IMR-90 (cell line): ENCODE measurements at regions of chr22 and their contacts with region 1.

Region 1: DNA sequence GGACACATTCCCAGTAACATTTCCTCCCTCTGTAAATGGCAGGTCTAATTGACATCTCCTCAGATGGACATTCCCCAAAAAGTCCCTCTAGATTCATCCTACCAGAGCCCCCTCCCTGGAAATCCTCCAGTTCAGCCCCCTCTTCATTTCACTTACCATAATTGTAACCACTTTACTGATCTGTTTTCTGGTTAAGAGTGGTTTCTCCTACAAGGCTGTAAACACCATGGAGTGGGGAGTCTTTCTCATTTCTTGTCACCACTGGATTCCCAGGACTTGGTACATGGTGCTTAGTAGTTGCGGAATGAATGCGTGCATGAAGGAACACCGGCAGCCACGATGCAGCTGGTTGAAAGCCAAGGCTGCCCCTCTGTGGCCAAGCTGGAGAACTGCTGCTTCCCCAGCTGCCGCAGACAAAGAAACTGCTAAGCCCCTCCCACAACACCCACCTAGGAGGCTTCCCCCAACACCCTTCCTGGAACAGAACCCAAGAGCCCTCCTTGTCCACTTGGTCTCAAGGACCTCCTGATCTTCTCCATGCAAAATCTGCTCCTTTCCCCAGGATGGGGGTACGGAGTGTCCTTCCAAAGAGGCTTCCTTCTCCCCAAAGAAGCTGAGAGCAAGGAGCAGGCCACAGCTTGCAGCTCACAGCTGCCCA is 18.6 kb upstream of the SCARF2 start:
- DNase-seq: peak; percentile 86
- ATAC-seq: peak; percentile 97
- H3K4me3 ChIP-seq: no peak overlapping the region
- H3K27ac ChIP-seq: no peak overlapping the region
- H3K4me1 ChIP-seq: peaks cover 5% of the 10 kb centered on the region
- H3K27me3 ChIP-seq: no peaks in the 10 kb centered on the region
- CTCF ChIP-seq: peak; percentile 97
- POLR2A ChIP-seq: no peak
- RAD21 ChIP-seq: peak; percentile 97

Region 2: GRCh38 chr22:20156611-20157429 is 299.4 kb before region 1 on chr22:
- CTCF ChIA-PET with region 1: no interaction called
- POLR2A ChIA-PET with region 1: no interaction called
- dilution Hi-C with region 1: no loop called
- in situ Hi-C with region 1: loop called (anchors 10 kb)
- intact Hi-C with region 1: loop called (anchors 5 kb)
- DNase-seq: peak; percentile 66
- ATAC-seq: peak; percentile 88
- H3K4me3 ChIP-seq: no peak overlapping the region
- H3K27ac ChIP-seq: no peak overlapping the region
- H3K4me1 ChIP-seq: peaks cover 6% of the 10 kb centered on the region
- H3K27me3 ChIP-seq: peaks cover 13% of the 10 kb centered on the region
- CTCF ChIP-seq: peak; percentile 96
- POLR2A ChIP-seq: peak; percentile 43; the same call in 1 of the 2 replicates
- RAD21 ChIP-seq: peak; percentile 98

Region 3: GRCh38 chr22:20380486-20380885 is 75.7 kb before region 1 on chr22:
- CTCF ChIA-PET with region 1: no interaction called
- POLR2A ChIA-PET with region 1: no interaction called
- dilution Hi-C with region 1: no loop called
- in situ Hi-C with region 1: no loop called
- intact Hi-C with region 1: no loop called
- DNase-seq: no peak
- ATAC-seq: no peak
- H3K4me3 ChIP-seq: no peak overlapping the region
- H3K27ac ChIP-seq: no peak overlapping the region
- H3K4me1 ChIP-seq: no peaks in the 10 kb centered on the region
- H3K27me3 ChIP-seq: peaks cover 12% of the 10 kb centered on the region
- CTCF ChIP-seq: no peak
- POLR2A ChIP-seq: no peak
- RAD21 ChIP-seq: no peak

Region 4: GRCh38 chr22:20393909-20394691 is 62.1 kb before region 1 on chr22 and contains the start of gene ZNF74:
- CTCF ChIA-PET with region 1: no interaction called
- POLR2A ChIA-PET with region 1: no interaction called
- dilution Hi-C with region 1: no loop called
- in situ Hi-C with region 1: loop called (anchors 10 kb)
- intact Hi-C with region 1: no loop called
- DNase-seq: peak; percentile 88
- ATAC-seq: peak; percentile 97
- H3K4me3 ChIP-seq: peak within 1 kb of the TSS; percentile 75
- H3K27ac ChIP-seq: peak within 1 kb of the TSS; percentile 86
- H3K4me1 ChIP-seq: peaks cover 14% of the 10 kb centered on the region
- H3K27me3 ChIP-seq: no peaks in the 10 kb centered on the region
- CTCF ChIP-seq: no peak; the same call in 1 of the 2 replicates
- POLR2A ChIP-seq: peak; percentile 55
- RAD21 ChIP-seq: no peak; the same call in 1 of the 2 replicates
- total RNA-seq, gene ZNF74: 6.9 and 7.5 TPM in 2 replicates

Region 5: DNA sequence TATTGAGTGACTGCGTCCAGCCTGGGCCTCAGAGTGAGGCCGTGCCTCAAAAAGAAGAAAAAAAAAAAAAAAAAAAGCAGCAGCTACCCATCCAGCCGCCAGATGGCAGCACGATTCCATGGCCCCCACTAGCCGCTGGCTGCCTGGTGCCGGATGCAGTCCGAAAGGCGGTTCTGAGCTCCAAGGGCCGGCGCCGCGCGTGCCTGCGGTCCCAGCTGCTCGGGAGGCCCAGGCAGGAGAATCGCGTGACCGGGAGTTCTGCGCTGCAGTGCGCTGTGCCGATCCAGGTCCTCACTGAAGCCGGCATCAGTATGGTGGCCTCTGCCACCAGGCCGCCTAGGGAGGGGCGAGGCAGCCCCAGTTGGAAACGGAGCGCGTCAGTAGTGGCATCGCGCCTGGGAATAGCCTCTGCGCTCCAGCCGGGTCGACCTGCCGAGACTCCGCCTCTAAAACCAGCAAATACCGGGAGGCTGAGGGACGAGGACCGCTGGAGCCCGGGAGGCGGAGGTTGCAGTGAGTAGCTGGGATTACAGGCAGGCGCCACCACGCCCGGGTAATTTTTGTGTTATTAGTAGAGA is 37.9 kb before region 1 on chr22:
- CTCF ChIA-PET with region 1: interaction called, 12 read pairs
- POLR2A ChIA-PET with region 1: no interaction called
- dilution Hi-C with region 1: no loop called
- in situ Hi-C with region 1: loop called (anchors 10 kb)
- intact Hi-C with region 1: loop called (anchors 1 kb)
- DNase-seq: peak; percentile 80
- ATAC-seq: peak; percentile 80
- H3K4me3 ChIP-seq: peak overlapping the region; percentile 31; the same call in 1 of the 2 replicates
- H3K27ac ChIP-seq: peak overlapping the region; percentile 22; the same call in 1 of the 2 replicates
- H3K4me1 ChIP-seq: peaks cover 11% of the 10 kb centered on the region; the same call in 1 of the 2 replicates
- H3K27me3 ChIP-seq: no peaks in the 10 kb centered on the region
- CTCF ChIP-seq: peak; percentile 95
- POLR2A ChIP-seq: 0 out of 2 replicates have a peak, but pooled peaks have one; percentile 51
- RAD21 ChIP-seq: peak; percentile 94

Region 6: DNA sequence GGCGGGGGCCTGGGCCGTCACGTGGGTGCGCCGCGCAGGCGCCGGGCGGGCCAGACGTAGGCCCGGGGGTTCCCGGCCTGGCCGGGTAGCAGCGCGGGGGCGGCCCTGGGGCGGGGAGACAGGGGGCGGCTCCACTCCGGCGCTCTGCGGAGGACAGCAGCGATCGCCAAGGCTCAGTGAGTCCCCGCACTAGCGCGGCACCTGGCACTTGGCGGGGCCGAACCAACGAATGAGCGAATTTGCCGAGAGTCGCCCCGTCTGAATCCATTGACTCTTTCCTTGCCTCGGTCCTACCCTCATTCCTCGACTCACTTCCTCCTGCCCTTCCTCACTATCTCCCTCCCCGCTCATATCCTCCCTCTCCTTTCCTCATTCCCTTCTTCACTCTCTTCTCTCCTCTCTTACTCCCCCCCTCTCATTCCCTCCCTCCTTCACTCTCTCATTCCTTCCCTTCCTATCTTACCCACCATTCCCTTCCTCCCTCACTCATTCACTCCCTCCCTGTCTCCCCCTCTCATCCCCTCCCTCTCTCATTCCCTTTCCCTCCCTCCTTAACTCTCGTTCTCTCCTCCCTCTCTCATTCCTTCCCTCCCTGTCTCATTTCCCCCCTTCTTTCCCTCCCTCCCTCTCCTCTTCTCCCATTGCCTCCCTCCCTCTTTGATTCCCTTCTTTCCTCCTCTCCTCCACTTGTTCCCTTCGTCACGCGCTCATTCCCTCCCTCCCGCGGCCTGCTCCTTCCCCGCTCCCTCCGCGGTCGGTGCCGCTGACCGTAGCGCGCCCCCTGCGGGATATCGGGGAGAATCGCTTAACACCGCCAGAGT is 39.9 kb after region 1 on chr22:
- CTCF ChIA-PET with region 1: no interaction called
- POLR2A ChIA-PET with region 1: no interaction called
- dilution Hi-C with region 1: no loop called
- in situ Hi-C with region 1: no loop called
- intact Hi-C with region 1: loop called (anchors 5 kb)
- DNase-seq: peak; percentile 87
- ATAC-seq: peak; percentile 95
- H3K4me3 ChIP-seq: peak overlapping the region; percentile 71
- H3K27ac ChIP-seq: peak overlapping the region; percentile 75
- H3K4me1 ChIP-seq: peaks cover 3% of the 10 kb centered on the region
- H3K27me3 ChIP-seq: no peaks in the 10 kb centered on the region
- CTCF ChIP-seq: peak; percentile 90
- POLR2A ChIP-seq: peak; percentile 93
- RAD21 ChIP-seq: peak; percentile 69

Region 7: GRCh38 chr22:20725987-20726558 is 269.9 kb after region 1 on chr22:
- CTCF ChIA-PET with region 1: no interaction called
- POLR2A ChIA-PET with region 1: no interaction called
- dilution Hi-C with region 1: no loop called
- in situ Hi-C with region 1: no loop called
- intact Hi-C with region 1: no loop called
- DNase-seq: no peak
- ATAC-seq: no peak
- H3K4me3 ChIP-seq: no peak overlapping the region
- H3K27ac ChIP-seq: no peak overlapping the region
- H3K4me1 ChIP-seq: no peaks in the 10 kb centered on the region
- H3K27me3 ChIP-seq: no peaks in the 10 kb centered on the region
- CTCF ChIP-seq: no peak
- POLR2A ChIP-seq: no peak
- RAD21 ChIP-seq: no peak